Activated CD8-positive, alpha-beta memory T cell treated with anti-CD3 and anti-CD28 coated beads, Interleukin-2, amount 10 ng/mL, durations not matched to agents 7 days and 5 days (primary cell): ENCODE measurements at regions of chr19 and their contacts with region 1.

Region 1: GRCh38 chr19:11924886-11925650 is at the start of gene ZNF700:
- DNase-seq: peak; percentile 97
- ATAC-seq: peak; percentile 92
- H3K4me3 Mint-ChIP-seq: peak within 1 kb of the TSS; percentile 98
- H3K27ac Mint-ChIP-seq: peak within 1 kb of the TSS; percentile 99
- H3K4me1 Mint-ChIP-seq: peaks cover 29% of the 10 kb centered on the region
- H3K27me3 Mint-ChIP-seq: no peaks in the 10 kb centered on the region
- total RNA-seq, gene ZNF700: 16.9 to 24.1 TPM

Region 2: GRCh38 chr19:11798391-11799330 is 126.4 kb before region 1 on chr19 and contains the start of gene ZNF491:
- CTCF ChIA-PET with region 1: interaction called, 23 read pairs
- DNase-seq: peak; percentile 92
- ATAC-seq: peak; percentile 99
- H3K4me3 Mint-ChIP-seq: peak within 1 kb of the TSS; percentile 80
- H3K27ac Mint-ChIP-seq: peak within 1 kb of the TSS; percentile 78
- H3K4me1 Mint-ChIP-seq: peaks cover 14% of the 10 kb centered on the region
- H3K27me3 Mint-ChIP-seq: no peaks in the 10 kb centered on the region
- total RNA-seq, gene ZNF491: 0.96 to 1.7 TPM

Region 3: DNA sequence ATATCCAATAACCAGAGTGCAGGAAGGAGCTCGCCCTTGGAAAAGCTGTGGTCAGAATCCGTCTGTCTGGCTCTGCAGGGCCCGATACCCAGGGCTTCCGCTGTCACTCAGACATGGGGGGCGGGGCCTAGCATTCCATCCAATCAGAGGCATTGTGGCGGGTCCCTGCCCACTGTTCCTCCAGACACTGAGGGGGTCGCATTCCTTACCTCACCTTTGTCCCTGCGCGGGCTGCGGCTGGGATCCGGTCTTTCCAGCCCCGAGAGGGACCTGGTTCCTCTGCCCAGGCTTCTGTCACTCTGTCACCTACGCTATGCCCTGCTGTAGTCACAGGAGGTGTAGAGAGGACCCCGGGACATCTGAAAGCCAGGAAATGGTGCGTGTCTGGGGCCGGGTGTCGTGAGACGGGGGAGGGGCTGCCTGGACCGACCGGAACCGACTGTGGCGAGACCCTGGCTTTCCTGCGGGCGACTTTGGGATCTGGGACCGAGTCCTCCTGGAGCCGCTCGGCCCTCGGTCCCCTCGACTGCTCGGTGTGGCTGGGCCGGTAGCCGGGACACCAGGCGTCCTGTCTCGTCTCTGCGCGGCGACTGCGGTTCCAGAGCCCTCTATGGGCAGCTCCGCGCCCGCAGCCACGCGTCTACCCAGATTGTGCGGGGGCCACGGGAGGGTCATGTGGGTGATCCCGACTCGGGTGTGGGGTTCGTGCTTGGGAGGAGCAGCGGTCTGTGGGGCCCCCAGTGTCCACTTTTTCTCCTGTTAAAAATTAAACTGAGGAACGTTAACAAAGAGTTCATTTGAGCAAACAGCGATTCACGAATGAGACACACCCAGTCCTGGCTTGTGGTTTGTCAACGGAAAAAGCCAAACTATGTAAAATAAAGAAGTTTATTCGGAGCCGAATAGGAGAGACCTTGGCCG is 37.2 kb before region 1 on chr19 and contains the start of gene ZNF69:
- CTCF ChIA-PET with region 1: interaction called, 27 read pairs
- DNase-seq: peak; percentile 75
- ATAC-seq: peak; percentile 90
- H3K4me3 Mint-ChIP-seq: peak within 1 kb of the TSS; percentile 77
- H3K27ac Mint-ChIP-seq: peak within 1 kb of the TSS; percentile 76
- H3K4me1 Mint-ChIP-seq: peaks cover 17% of the 10 kb centered on the region
- H3K27me3 Mint-ChIP-seq: peaks cover 4% of the 10 kb centered on the region
- total RNA-seq, gene ZNF69: 1.2 to 2.0 TPM

Region 4: DNA sequence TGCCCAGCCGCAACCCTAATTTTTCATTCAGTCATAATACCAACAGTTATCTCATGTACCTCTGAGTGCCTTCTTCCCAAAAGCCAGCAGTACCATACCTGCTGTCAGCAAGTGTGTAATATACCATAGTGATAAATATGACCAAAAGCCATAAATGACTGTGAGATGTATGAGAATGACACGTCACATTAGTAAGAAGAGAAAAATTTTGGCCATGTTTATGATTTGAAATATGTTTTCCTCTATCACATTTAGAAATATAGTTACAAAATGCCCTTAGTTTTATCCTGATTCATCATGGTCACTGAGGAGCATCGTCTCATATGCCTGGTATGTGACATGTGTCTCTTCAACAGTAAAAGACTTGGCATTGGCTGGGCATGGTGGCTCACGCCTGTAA is 11.4 kb before region 1 on chr19:
- CTCF ChIA-PET with region 1: no interaction called
- DNase-seq: no peak
- ATAC-seq: no peak
- H3K4me3 Mint-ChIP-seq: no peak overlapping the region
- H3K27ac Mint-ChIP-seq: no peak overlapping the region
- H3K4me1 Mint-ChIP-seq: no peaks in the 10 kb centered on the region
- H3K27me3 Mint-ChIP-seq: no peaks in the 10 kb centered on the region

Region 5: DNA sequence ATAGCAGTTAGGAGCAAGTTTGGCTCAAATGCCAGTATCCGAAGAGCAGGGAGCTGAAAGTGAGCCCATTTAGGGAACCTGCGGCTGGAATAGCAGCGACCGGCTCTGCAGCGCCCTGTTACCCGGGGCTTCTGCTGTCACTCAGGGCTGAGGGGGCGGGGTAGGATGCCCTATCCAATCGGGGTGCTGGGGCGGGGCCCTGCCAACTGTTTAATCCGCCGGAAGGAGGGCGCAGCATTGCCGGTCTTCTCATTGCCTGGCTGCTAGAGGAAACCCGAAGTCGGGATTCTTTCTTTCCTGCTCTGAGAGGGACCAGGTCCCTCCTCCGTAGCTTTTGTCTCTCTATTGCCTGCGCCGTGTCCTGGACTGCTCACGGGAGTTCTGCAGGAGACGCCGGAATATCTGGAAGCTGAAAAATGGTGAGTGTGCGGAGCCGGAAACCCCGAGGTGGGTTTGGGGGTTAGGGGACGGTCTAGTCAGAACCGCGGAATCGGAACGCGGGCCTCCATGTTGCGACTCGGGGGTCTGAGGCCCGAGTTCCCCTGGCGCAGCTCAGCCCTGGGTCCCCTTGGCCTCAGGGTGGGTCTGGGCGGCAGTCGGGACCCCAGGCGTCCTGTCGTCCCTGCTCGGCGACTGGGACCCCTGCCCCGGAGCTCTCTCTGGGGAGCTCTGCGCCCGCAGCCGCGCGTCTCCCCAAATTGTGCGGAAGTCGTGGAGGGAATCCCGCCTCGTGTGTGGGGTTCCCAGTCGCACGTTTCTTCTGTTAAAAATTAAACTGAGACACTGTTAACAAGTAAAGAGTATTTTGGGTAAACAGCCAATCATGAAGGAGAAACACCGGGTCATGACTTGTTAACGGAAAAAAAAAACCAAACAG is 62.6 kb after region 1 on chr19:
- CTCF ChIA-PET with region 1: interaction called, 148 read pairs
- DNase-seq: peak; percentile 97
- ATAC-seq: peak; percentile 96
- H3K4me3 Mint-ChIP-seq: peak overlapping the region; percentile 99
- H3K27ac Mint-ChIP-seq: peak overlapping the region; percentile 98
- H3K4me1 Mint-ChIP-seq: peaks cover 18% of the 10 kb centered on the region
- H3K27me3 Mint-ChIP-seq: no peaks in the 10 kb centered on the region

Region 6: DNA sequence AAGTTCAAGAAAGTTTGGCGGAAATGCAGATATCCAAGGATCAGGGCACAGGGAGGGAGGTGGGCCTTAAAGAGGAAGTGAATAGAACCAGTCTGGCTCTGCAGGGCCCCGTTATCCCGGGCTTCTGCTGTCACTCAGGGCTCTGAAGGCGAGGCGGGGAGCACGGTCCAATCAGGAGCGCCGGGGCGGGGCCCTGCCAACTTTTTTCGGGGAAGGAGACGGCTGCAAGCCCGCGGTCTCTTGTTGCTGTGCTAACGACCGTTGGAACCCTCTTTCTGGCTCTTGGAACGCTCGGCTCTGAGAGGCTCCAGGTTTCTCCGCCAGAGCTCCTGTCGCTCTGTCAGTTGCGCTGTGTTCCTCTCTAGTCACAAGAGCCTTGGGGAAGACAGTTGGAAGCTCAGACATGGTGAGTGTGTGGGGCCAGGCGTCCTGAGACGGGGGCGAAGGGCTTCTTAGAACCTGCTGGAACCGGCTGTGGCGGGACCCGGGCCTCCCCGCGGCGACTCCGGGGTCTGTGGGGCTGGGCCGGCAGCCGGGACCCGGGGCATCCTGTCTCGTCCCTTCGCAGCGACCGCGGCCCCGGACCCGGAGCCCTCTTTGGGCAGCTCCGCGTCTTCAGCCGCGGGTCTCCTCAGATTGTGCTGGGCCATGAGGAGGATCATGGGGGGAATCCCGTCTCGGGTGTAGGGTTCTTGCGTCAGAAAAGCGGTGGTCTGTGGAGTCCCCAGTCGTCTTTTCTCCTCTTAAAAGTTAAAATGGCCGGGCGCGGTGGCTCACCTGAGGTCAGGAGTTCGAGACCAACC is 167.2 kb after region 1 on chr19:
- CTCF ChIA-PET with region 1: interaction called, 15 read pairs
- DNase-seq: peak; percentile 84
- ATAC-seq: peak; percentile 94
- H3K4me3 Mint-ChIP-seq: peak overlapping the region; percentile 78
- H3K27ac Mint-ChIP-seq: peak overlapping the region; percentile 83
- H3K4me1 Mint-ChIP-seq: peaks cover 11% of the 10 kb centered on the region
- H3K27me3 Mint-ChIP-seq: no peaks in the 10 kb centered on the region

Region 7: DNA sequence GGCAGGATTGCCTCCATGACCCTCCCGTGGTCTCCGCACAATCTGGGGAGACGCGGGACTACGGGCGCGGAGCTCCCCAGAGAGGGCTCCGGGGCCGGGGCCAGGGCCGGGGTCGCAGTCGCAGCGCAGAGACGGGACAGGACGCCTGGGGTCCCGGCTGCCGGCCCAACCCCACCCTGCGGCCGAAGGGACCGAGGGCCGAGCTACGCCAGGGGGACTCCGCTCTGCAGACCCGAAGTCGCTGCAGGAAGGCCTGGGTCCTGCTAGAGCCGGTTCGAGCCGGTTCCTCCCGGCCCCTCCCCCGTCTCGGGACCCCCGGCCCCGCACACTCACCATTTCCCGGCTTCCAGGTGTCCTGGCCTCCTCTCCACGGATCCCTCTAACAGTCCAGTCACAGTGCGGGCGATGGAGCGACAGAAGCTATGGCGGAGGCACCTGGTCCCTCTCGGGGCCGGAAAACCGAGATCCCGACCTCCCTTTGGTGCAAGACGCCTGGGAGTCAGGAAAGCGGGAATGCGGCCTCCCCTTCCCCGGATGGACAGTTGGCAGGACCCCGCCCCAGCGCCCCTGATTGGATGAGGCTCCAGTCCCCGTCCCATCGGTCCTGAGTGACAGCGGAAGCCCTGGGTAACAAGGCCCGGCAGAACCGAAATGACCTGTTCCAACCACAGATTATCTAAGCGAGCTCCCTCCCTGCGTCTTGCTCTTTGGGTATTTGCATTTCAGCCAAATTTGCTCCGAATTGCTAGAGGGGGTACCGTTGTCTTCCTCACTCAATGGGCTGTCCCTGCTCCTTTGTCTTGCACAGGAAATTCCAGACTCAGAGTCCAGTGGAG is 231.4 kb after region 1 on chr19 and contains the start of gene ZNF625:
- CTCF ChIA-PET with region 1: interaction called, 18 read pairs
- DNase-seq: peak; percentile 72
- ATAC-seq: peak; percentile 82
- H3K4me3 Mint-ChIP-seq: peak within 1 kb of the TSS; percentile 81
- H3K27ac Mint-ChIP-seq: peak within 1 kb of the TSS; percentile 74
- H3K4me1 Mint-ChIP-seq: peaks cover 12% of the 10 kb centered on the region
- H3K27me3 Mint-ChIP-seq: peaks cover 4% of the 10 kb centered on the region
- total RNA-seq, gene ZNF625: 3.9 to 4.3 TPM